GM12878 (cell line): ENCODE measurements at regions of chr10 and their contacts with region 1.

Region 1: GRCh38 chr10:86371691-86372090 is 5.1 kb upstream of the GRID1 start:
- DNase-seq: no peak
- ATAC-seq: no peak
- H3K4me3 ChIP-seq: no peak overlapping the region
- H3K27ac ChIP-seq: no peak overlapping the region
- H3K4me1 ChIP-seq: no peaks in the 10 kb centered on the region; the same call in 1 of the 2 replicates
- H3K27me3 ChIP-seq: peaks cover 2 to 5% of the 10 kb centered on the region in 2 experiments; a peak in 2 of 4 replicates
- CTCF ChIP-seq: no peak
- EP300 ChIP-seq: no peak
- POLR2A ChIP-seq: no peak
- RAD21 ChIP-seq: no peak

Region 2: DNA sequence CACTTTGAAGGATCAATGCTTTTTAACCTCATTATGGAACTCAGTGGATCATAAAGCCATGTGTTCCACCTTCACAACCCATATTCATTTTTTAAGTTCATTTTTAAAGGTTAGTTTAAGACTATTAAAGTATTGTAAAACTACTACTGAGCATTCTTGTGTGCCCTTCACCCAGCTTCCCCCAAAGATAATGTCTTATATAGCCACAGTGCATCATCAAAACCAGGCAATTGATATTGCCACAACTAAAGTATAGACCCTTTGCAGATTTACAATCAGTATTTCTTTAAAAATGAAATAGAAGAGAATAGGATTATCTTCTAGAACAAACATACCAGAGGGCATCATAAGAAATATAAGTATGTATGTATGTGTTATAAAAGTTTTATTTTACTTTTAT is 1446.2 kb before region 1 on chr10:
- CTCF ChIA-PET with region 1: no interaction called
- POLR2A ChIA-PET with region 1: no interaction called
- RAD21 ChIA-PET with region 1: no interaction called
- SMC1A ChIA-PET with region 1: no interaction called
- in situ Hi-C with region 1: loop called (anchors 5 kb)
- intact Hi-C with region 1: loop called (anchors 5 kb)
- DNase-seq: no peak
- ATAC-seq: no peak
- H3K4me3 ChIP-seq: no peak overlapping the region
- H3K27ac ChIP-seq: no peak overlapping the region
- H3K4me1 ChIP-seq: no peaks in the 10 kb centered on the region
- H3K27me3 ChIP-seq: no peaks in the 10 kb centered on the region
- CTCF ChIP-seq: no peak
- EP300 ChIP-seq: no peak
- POLR2A ChIP-seq: no peak
- RAD21 ChIP-seq: no peak

Region 3: DNA sequence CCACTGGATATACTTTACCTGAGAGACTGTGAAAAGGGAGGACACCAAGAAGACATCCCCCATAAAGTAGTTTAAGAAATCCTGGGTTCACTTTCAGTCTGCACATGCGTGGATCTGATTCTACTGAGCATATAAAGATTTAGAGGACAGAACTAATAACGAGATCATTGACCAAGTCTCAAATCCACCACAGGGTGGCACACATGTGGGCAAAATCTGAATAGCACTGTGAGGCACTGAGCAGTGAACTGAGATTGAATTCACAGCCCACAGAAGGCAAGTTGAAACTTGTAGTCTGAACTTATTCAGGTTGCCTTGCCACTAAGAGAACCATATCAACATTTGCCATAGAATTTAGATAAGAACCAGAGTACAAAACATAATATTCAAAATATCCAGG is 823.7 kb before region 1 on chr10:
- CTCF ChIA-PET with region 1: no interaction called
- POLR2A ChIA-PET with region 1: no interaction called
- RAD21 ChIA-PET with region 1: no interaction called
- SMC1A ChIA-PET with region 1: no interaction called
- in situ Hi-C with region 1: loop called (anchors 10 kb)
- intact Hi-C with region 1: loop called (anchors 5 kb)
- DNase-seq: peak; percentile 35
- ATAC-seq: peak; percentile 96
- H3K4me3 ChIP-seq: no peak overlapping the region
- H3K27ac ChIP-seq: no peak overlapping the region
- H3K4me1 ChIP-seq: no peaks in the 10 kb centered on the region; the same call in 1 of the 2 replicates
- H3K27me3 ChIP-seq: no peaks in the 10 kb centered on the region
- CTCF ChIP-seq: peak; percentile 34 to 47 (median 38); a peak in 4 of 6 replicates
- EP300 ChIP-seq: no peak
- POLR2A ChIP-seq: no peak
- RAD21 ChIP-seq: peak; percentile 58

Region 4: GRCh38 chr10:86411281-86411841 is 39.7 kb after region 1 on chr10:
- CTCF ChIA-PET with region 1: no interaction called
- POLR2A ChIA-PET with region 1: no interaction called
- RAD21 ChIA-PET with region 1: no interaction called
- SMC1A ChIA-PET with region 1: no interaction called
- in situ Hi-C with region 1: no loop called
- intact Hi-C with region 1: no loop called
- DNase-seq: peak; percentile 74
- ATAC-seq: peak; percentile 74
- H3K4me3 ChIP-seq: peak overlapping the region; percentile 38; the same call in 1 of the 2 replicates
- H3K27ac ChIP-seq: peak overlapping the region; percentile 82
- H3K4me1 ChIP-seq: peaks cover 38% of the 10 kb centered on the region
- H3K27me3 ChIP-seq: no peaks in the 10 kb centered on the region
- CTCF ChIP-seq: no peak
- EP300 ChIP-seq: peak in 1 of 2 experiments; percentile 66; a peak in 1 of 4 replicates
- POLR2A ChIP-seq: peak; percentile 68
- RAD21 ChIP-seq: no peak